Aorta (tissue), 5 donors: ENCODE measurements at regions of chr10 and their contacts with region 1.

Region 1: DNA sequence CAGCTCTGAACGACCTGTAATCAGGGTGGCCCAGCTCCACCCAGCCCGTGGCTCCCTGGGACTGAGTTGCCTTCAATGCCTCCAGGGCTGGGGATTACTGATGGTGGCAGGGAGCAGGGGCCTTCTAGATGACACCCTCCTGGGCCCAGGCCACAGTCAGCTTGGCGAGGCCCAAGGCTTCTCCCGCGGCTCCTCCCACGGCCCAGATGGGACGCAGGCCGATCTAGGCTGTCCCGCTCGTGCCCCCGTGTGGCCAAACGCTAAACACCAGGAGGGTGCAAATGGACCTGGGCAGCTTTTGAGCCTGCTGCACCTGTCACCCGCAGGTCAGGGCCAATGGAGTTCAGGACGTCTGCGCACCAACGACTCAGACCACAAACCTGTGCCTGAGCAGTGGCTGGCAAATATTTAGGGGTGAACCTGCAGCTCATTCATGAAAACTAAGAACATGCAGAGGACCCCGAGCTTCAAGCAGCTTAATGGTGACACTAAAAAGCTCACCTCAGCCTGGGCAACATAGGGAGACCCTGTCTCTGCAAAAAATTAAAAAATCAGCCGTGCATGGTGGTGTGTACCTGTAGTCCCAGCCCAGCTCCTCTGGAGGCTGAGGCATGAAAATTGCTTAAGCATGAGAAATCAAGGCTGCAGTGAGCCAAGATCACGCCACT is 43.2 kb downstream of the ASB13 start:
- DNase-seq: peak; percentile 93 to 98
- ATAC-seq: peak; percentile 85
- H3K4me3 ChIP-seq: no peak overlapping the region
- H3K27ac ChIP-seq: no peak overlapping the region
- H3K4me1 ChIP-seq: peaks cover 0 to 2% of the 10 kb centered on the region in 2 donors
- H3K27me3 ChIP-seq: no peaks in the 10 kb centered on the region

Region 2: GRCh38 chr10:5466418-5467154 is 156.6 kb before region 1 on chr10:
- intact Hi-C with region 1: loop called in 1 of 2 experiments (anchors 5 kb)
- DNase-seq: no peak
- ATAC-seq: peak; percentile 51
- H3K4me3 ChIP-seq: no peak overlapping the region
- H3K27ac ChIP-seq: peak overlapping the region; percentile 22 to 53
- H3K4me1 ChIP-seq: no peaks in the 10 kb centered on the region
- H3K27me3 ChIP-seq: no peaks in the 10 kb centered on the region

Region 3: DNA sequence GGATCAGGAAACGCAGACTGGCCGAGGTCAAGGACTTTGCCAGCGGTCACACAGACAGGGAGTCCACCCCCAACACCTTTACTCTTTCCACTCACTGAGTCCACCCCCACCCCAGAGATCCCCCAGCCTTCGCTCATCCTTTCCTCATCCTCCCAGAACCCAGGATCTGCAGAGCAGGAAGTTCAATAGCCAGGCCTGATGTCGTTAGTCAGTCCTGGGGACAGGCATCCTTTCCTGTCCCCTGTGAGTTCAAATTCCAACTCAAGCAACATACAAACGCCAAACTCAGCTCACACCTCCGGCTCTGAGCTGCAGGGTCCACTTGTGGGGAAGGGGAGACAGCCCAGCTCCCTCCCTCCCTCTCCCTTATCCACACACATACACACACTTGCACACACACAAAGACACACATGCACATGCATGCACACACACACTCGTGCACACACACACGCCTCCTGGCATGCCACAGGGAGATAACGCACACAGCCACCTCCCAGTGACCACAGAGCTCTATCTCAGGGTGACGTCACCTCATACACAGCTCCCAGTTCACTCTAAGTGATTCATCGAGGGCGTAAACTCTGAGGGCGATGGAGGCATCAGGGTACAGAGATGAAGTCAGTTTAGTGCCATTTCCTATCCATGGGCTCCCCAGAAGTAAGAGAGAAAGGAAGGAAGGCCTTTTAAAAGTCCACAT is 74.5 kb before region 1 on chr10:
- intact Hi-C with region 1: loop called in 1 of 2 experiments (anchors 5 kb)
- DNase-seq: peak; percentile 83 to 84
- ATAC-seq: peak; percentile 74
- H3K4me3 ChIP-seq: no peak overlapping the region
- H3K27ac ChIP-seq: peak overlapping the region; percentile 71 to 89
- H3K4me1 ChIP-seq: peaks cover 3 to 4% of the 10 kb centered on the region in 2 donors
- H3K27me3 ChIP-seq: no peaks in the 10 kb centered on the region

Region 4: DNA sequence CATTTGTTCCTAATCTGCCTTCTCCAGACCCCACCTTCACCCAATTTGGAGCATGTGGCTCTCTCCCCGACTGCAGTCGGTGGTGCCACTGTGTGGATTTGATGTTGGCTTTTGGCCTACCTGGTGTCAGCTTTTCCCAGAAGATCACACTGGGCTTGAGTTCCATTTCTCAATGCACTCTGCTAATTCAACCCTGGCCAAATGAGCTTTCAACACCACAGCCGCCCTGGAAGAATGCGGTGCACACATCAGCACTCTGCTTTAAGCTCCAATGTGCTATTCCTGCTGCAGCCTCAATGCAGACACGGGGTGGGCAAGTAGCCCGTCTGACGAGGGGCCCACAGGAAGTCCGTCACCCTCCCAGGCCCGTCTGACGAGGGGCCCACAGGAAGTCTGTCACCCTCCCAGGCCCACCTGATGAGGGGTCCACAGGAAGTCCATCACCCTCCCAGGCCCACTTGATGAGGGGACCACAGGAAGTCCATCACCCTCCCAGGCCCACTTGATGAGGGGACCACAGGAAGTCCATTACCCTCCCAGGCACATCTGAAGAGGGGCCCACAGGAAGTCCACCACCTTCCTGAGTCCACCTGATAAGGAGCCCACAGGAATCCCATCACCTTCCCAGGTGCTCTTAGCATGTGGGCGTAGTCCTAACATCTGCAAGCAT is 21.3 kb before region 1 on chr10:
- intact Hi-C with region 1: loop called in 1 of 2 experiments (anchors 2 kb)
- DNase-seq: peak; percentile 39 to 58
- ATAC-seq: no peak
- H3K4me3 ChIP-seq: no peak overlapping the region
- H3K27ac ChIP-seq: peak overlapping the region; percentile 68 to 88
- H3K4me1 ChIP-seq: peaks cover 5 to 8% of the 10 kb centered on the region in 2 donors
- H3K27me3 ChIP-seq: no peaks in the 10 kb centered on the region

Region 5: DNA sequence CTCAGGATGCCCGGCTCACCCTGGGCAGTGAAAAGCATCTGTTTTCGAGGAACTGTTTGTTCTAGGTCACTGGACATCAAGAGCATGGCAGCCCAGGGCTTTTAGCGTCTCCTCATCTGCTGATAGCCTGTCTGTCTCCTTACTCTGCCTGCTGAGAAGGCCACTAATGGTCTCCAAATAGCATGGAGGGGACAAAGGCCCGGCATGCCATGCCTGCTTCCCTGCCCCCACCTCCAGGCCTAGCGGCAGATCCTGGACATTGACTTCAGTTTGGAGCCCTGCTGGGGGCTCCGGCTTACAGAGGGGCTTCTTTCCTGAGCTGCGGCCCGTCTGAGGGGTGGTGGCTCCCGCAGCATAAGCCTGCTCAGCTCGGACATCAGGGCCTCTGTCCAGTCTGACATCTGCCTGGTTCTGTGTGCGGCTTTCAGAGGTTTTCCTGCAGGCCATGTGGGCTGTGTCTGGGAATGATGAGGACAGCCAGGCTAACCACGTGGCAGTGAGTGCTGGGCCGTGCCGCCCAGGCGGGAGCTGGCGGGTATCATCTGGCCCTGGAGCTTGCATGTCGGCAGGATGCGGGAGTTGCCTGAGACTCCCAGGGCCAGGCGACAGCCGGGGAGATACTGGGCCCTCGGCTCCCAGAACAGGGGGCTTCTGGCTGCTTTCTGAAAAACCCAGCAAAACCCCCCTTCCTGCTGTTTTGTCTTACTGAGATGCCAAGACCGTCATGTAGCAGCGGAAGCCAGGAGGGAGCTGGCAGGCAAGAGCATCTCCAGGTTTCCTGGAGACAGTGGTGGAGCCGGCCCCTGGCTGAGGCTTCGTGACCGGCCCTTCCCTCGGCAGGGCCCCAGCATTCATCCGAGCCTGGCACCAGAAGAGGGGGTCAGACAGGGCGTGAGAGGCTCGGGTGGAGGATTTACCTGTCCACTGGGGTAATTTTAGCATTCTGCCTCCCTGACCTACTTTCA is 588.7 kb after region 1 on chr10:
- intact Hi-C with region 1: no loop called
- DNase-seq: peak; percentile 76 to 85
- ATAC-seq: peak; percentile 71
- H3K4me3 ChIP-seq: no peak overlapping the region
- H3K27ac ChIP-seq: peak overlapping the region in 1 of 2 donors; percentile 50
- H3K4me1 ChIP-seq: peaks cover 0 to 6% of the 10 kb centered on the region in 2 donors
- H3K27me3 ChIP-seq: no peaks in the 10 kb centered on the region